A549 (cell line): ENCODE measurements at regions of chr6 and their contacts with region 1.

Region 1: GRCh38 chr6:26025894-26026832 is 61.1 kb upstream of the HFE start:
- DNase-seq: peak; percentile 45 to 95
- ATAC-seq: peak; percentile 58 to 60
- H3K4me3 ChIP-seq: peak overlapping the region; percentile 69
- H3K27ac ChIP-seq: peak overlapping the region; percentile 95 to 100
- H3K4me1 ChIP-seq: peaks cover 52% of the 10 kb centered on the region
- CTCF ChIP-seq: peak; percentile 53
- EP300 ChIP-seq: no peak
- POLR2A ChIP-seq: peak; percentile 39; the same call in 1 of the 2 replicates
- RAD21 ChIP-seq: peak in 1 of 2 experiments; percentile 30; a peak in 2 of 5 replicates

Region 2: DNA sequence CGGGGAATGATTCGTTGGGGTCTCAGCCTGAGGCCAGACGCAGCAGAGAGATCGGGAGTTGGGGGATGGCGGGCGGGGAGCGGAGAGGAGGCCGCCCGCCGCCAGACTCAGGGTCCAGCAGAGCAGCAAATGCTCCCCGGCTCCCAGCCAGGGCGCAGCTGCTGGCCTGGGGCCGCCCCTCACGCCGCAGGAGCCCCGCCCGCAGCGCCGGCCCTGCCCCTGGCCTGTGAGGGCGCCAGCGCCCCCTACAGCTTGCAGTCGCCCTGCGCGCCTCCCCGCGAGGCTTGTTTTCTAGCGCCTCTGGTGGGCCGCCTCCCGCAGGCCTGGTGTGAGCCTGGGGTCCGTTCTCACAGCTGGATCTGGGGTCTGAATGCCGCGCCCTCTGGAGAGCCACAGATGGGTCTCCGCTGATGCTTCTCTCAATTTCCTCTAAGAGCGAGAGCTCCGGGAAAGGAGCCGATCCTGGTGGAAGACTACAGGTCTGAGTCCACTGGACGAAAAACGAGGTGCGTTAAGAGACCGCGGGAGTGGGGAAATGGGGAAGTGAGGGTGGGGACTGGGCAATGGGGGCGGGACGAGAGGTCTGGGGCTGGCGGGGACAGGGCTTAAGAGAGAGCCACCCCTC is 33.6 kb before region 1 on chr6:
- CTCF ChIA-PET with region 1: interaction called, 7 read pairs
- POLR2A ChIA-PET with region 1: interaction called, 48 read pairs
- DNase-seq: peak; percentile 68 to 90
- ATAC-seq: peak; percentile 93 to 94
- H3K4me3 ChIP-seq: peak overlapping the region; percentile 52
- H3K27ac ChIP-seq: peak overlapping the region; percentile 93 to 95
- H3K4me1 ChIP-seq: peaks cover 11% of the 10 kb centered on the region
- CTCF ChIP-seq: peak; percentile 94
- EP300 ChIP-seq: no peak
- POLR2A ChIP-seq: peak; percentile 90
- RAD21 ChIP-seq: peak; percentile 32 to 61; a peak in 4 of 5 replicates

Region 3: GRCh38 chr6:26003102-26003694 is 23.0 kb before region 1 on chr6:
- CTCF ChIA-PET with region 1: interaction called, 85 read pairs
- POLR2A ChIA-PET with region 1: interaction called, 7 read pairs
- DNase-seq: peak; percentile 46 to 62
- ATAC-seq: peak; percentile 76 to 82; a peak in 5 of 6 replicates
- H3K4me3 ChIP-seq: no peak overlapping the region
- H3K27ac ChIP-seq: no peak overlapping the region
- H3K4me1 ChIP-seq: no peaks in the 10 kb centered on the region
- CTCF ChIP-seq: peak; percentile 59
- EP300 ChIP-seq: no peak
- POLR2A ChIP-seq: no peak
- RAD21 ChIP-seq: peak; percentile 46 to 61

Region 4: DNA sequence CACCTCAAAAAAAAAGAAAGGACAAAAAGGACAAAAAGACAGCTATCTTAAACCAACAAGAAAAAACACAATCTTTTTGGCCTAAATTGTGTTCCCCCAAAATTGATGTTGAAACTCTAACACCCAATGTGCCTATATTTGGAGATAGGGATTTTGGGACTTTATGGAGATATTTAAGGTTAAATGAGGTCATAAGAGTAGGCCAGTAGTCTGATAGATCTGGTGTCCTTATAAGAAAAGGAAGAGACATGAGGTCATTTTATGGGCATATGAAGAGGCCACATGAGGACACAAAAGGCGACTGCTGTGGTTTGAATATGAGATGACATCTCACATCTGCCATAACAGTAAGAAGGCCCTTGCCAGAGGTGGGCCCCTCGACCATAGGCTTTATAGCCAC is 14.1 kb before region 1 on chr6:
- CTCF ChIA-PET with region 1: interaction called, 85 read pairs
- POLR2A ChIA-PET with region 1: interaction called, 145 read pairs
- DNase-seq: no peak
- ATAC-seq: no peak
- H3K4me3 ChIP-seq: no peak overlapping the region
- H3K27ac ChIP-seq: no peak overlapping the region
- H3K4me1 ChIP-seq: no peaks in the 10 kb centered on the region
- CTCF ChIP-seq: no peak
- EP300 ChIP-seq: no peak
- POLR2A ChIP-seq: no peak
- RAD21 ChIP-seq: no peak

Region 5: GRCh38 chr6:26045065-26045927 is 19.1 kb after region 1 on chr6:
- CTCF ChIA-PET with region 1: interaction called, 24 read pairs
- POLR2A ChIA-PET with region 1: interaction called, 238 read pairs
- DNase-seq: peak; percentile 55 to 86
- ATAC-seq: peak; percentile 67 to 77
- H3K4me3 ChIP-seq: peak overlapping the region; percentile 40
- H3K27ac ChIP-seq: peak overlapping the region; percentile 81 to 89
- H3K4me1 ChIP-seq: 0 out of 3 replicates have a peak, but pooled peaks cover 11% of the 10 kb centered on the region
- CTCF ChIP-seq: no peak
- EP300 ChIP-seq: no peak
- POLR2A ChIP-seq: peak; percentile 83
- RAD21 ChIP-seq: no peak

Region 6: GRCh38 chr6:26054857-26055669 is 28.9 kb after region 1 on chr6:
- CTCF ChIA-PET with region 1: interaction called, 4 read pairs
- POLR2A ChIA-PET with region 1: interaction called, 238 read pairs
- DNase-seq: peak; percentile 70 to 91
- ATAC-seq: peak; percentile 68 to 83
- H3K4me3 ChIP-seq: peak overlapping the region; percentile 76
- H3K27ac ChIP-seq: peak overlapping the region; percentile 95 to 100
- H3K4me1 ChIP-seq: peaks cover 19% of the 10 kb centered on the region
- CTCF ChIP-seq: no peak
- EP300 ChIP-seq: no peak
- POLR2A ChIP-seq: peak; percentile 66
- RAD21 ChIP-seq: no peak; a peak in 1 of 5 replicates

Region 7: GRCh38 chr6:26103770-26104456 is 77.8 kb after region 1 on chr6:
- CTCF ChIA-PET with region 1: interaction called, 4 read pairs
- POLR2A ChIA-PET with region 1: interaction called, 36 read pairs
- DNase-seq: peak; percentile 57 to 93
- ATAC-seq: peak; percentile 88 to 93
- H3K4me3 ChIP-seq: peak overlapping the region; percentile 43
- H3K27ac ChIP-seq: peak overlapping the region; percentile 87 to 92
- H3K4me1 ChIP-seq: peaks cover 19% of the 10 kb centered on the region
- CTCF ChIP-seq: peak; percentile 18; the same call in 2 of the 3 replicates
- EP300 ChIP-seq: peak; percentile 51 to 56; a peak in 2 of 5 replicates
- POLR2A ChIP-seq: peak; percentile 99
- RAD21 ChIP-seq: 0 out of 5 replicates have a peak, but pooled peaks have one; percentile 11 to 14